Endothelial cell of umbilical vein (primary cell): ENCODE measurements at regions of chr6 and their contacts with region 1.

Region 1: GRCh38 chr6:148177589-148178233 is 164.9 kb upstream of the SASH1 start:
- DNase-seq: peak; percentile 72
- H3K4me3 ChIP-seq: no peak overlapping the region
- H3K27ac ChIP-seq: no peak overlapping the region
- H3K4me1 ChIP-seq: peaks cover 5% of the 10 kb centered on the region
- H3K27me3 ChIP-seq: no peaks in the 10 kb centered on the region
- CTCF ChIP-seq: peak; percentile 70 to 82
- POLR2A ChIP-seq: no peak

Region 2: GRCh38 chr6:147366290-147366689 is 811.4 kb before region 1 on chr6:
- CTCF ChIA-PET with region 1: no interaction called
- POLR2A ChIA-PET with region 1: no interaction called
- dilution Hi-C with region 1: no loop called
- intact Hi-C with region 1: no loop called
- DNase-seq: no peak
- H3K4me3 ChIP-seq: no peak overlapping the region
- H3K27ac ChIP-seq: no peak overlapping the region
- H3K4me1 ChIP-seq: no peaks in the 10 kb centered on the region
- H3K27me3 ChIP-seq: no peaks in the 10 kb centered on the region
- CTCF ChIP-seq: no peak
- POLR2A ChIP-seq: no peak

Region 3: GRCh38 chr6:147506704-147507114 is 671.0 kb before region 1 on chr6:
- CTCF ChIA-PET with region 1: interaction called, 42 read pairs
- POLR2A ChIA-PET with region 1: no interaction called
- dilution Hi-C with region 1: loop called (anchors 25 kb)
- intact Hi-C with region 1: no loop called
- DNase-seq: peak; percentile 57
- H3K4me3 ChIP-seq: peak overlapping the region; percentile 76 to 96 (median 87)
- H3K27ac ChIP-seq: peak overlapping the region; percentile 7
- H3K4me1 ChIP-seq: peaks cover 26% of the 10 kb centered on the region
- H3K27me3 ChIP-seq: no peaks in the 10 kb centered on the region
- CTCF ChIP-seq: peak; percentile 78 to 85
- POLR2A ChIP-seq: no peak

Region 4: DNA sequence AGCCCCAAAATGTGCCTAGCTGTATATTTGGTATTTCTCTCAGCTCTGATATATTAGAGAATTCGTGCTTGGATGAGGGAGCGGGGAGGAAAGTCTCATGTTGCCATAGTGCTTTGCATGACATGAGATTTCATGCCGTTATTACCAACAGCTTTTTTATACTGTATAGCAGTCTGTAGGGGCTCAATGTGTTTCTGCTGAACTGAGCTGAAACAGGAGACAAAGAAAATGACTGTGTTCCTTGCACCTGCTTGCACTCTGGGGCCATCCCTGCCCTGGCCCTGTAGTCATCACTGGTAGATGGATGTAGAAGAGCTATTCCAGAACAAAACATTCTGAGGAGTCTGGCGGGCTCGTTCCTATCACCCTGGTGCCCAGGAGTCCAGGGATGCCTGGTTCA is 37.0 kb after region 1 on chr6:
- CTCF ChIA-PET with region 1: interaction called, 12 read pairs
- POLR2A ChIA-PET with region 1: no interaction called
- dilution Hi-C with region 1: no loop called
- intact Hi-C with region 1: no loop called
- DNase-seq: no peak
- H3K4me3 ChIP-seq: no peak overlapping the region
- H3K27ac ChIP-seq: no peak overlapping the region
- H3K4me1 ChIP-seq: no peaks in the 10 kb centered on the region
- H3K27me3 ChIP-seq: no peaks in the 10 kb centered on the region
- CTCF ChIP-seq: no peak
- POLR2A ChIP-seq: no peak

Region 5: GRCh38 chr6:148311966-148312669 is 134.4 kb after region 1 on chr6:
- CTCF ChIA-PET with region 1: interaction called, 16 read pairs
- POLR2A ChIA-PET with region 1: no interaction called
- dilution Hi-C with region 1: no loop called
- intact Hi-C with region 1: no loop called
- DNase-seq: no peak
- H3K4me3 ChIP-seq: no peak overlapping the region
- H3K27ac ChIP-seq: no peak overlapping the region
- H3K4me1 ChIP-seq: peaks cover 12% of the 10 kb centered on the region
- H3K27me3 ChIP-seq: no peaks in the 10 kb centered on the region
- CTCF ChIP-seq: no peak
- POLR2A ChIP-seq: no peak

Region 6: DNA sequence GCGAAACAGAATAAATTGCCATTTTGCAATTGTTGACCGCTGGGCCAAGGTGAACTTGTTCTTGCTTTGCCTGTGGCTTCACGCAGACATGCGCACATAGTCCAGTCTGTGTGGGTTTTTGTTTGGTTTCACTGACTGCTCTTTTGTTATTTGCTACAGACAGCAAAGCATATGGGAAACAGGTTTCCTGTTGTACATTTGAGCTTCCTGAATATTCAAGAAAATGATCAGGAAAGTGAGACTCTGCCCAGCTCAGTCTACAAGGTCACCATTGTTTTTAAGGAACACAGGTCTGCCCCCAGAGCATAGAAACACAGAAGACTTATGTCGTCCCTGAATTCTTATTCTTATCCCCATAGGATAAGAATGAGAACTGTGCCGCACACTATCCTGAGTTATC is 220.5 kb after region 1 on chr6:
- CTCF ChIA-PET with region 1: interaction called, 4 read pairs
- POLR2A ChIA-PET with region 1: no interaction called
- dilution Hi-C with region 1: no loop called
- intact Hi-C with region 1: loop called (anchors 2 kb)
- DNase-seq: peak; percentile 95
- H3K4me3 ChIP-seq: peak overlapping the region in 1 of 3 experiments; percentile 3
- H3K27ac ChIP-seq: peak overlapping the region; percentile 98
- H3K4me1 ChIP-seq: peaks cover 41% of the 10 kb centered on the region
- H3K27me3 ChIP-seq: no peaks in the 10 kb centered on the region
- CTCF ChIP-seq: no peak
- POLR2A ChIP-seq: peak; percentile 52

Region 7: GRCh38 chr6:148559848-148560433 is 382.2 kb after region 1 on chr6:
- CTCF ChIA-PET with region 1: interaction called, 3 read pairs
- POLR2A ChIA-PET with region 1: no interaction called
- dilution Hi-C with region 1: no loop called
- intact Hi-C with region 1: loop called (anchors 2 kb)
- DNase-seq: peak; percentile 64
- H3K4me3 ChIP-seq: peak overlapping the region in 2 of 3 experiments; percentile 36 to 41
- H3K27ac ChIP-seq: no peak overlapping the region
- H3K4me1 ChIP-seq: no peaks in the 10 kb centered on the region
- H3K27me3 ChIP-seq: no peaks in the 10 kb centered on the region
- CTCF ChIP-seq: peak; percentile 96 to 99
- POLR2A ChIP-seq: no peak